ENCODE measurements at regions of chr5 and their contacts with region 1.

Region 1: DNA sequence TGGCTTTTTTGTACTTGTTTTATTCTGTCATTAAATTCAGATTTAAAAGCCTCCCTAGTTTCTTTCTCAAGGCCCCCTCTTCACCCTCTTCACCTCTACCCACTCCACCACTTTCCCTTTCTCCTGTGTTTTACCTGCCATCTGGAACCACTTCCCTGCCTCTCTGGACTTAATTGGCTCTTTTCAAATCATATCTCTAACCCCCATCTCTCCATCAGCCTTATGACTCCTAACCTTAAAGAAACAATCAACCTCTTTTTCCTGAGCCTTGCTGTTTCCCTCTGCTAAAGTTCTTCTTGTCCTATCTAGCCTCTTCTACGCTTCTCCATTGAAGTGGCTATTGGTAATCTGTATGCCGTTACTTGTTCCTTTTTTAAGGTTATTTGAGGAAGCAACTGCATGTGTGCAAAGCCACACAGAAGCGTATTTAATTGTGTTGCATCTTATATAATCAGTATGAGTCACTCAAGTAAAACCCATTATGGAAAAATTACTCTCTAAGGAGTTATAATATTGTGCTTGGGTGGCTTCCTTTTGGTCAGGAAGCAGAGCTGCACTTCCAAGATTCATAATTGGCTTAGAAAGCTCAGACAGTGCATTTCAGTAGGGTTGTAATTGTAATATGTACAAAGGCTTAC is 653.6 kb upstream of the ITGA1 start:
- DNase-seq: no peak
- ATAC-seq: no peak
- H3K4me3 ChIP-seq: no peak overlapping the region
- H3K4me3 Mint-ChIP-seq: no peak overlapping the region
- H3K27ac ChIP-seq: no peak overlapping the region
- H3K27ac Mint-ChIP-seq: no peak overlapping the region
- H3K4me1 ChIP-seq: no peaks in the 10 kb centered on the region
- H3K4me1 Mint-ChIP-seq: no peaks in the 10 kb centered on the region
- H3K27me3 ChIP-seq: no peaks in the 10 kb centered on the region
- H3K27me3 Mint-ChIP-seq: no peaks in the 10 kb centered on the region
- CTCF ChIP-seq: no peak

Region 2: DNA sequence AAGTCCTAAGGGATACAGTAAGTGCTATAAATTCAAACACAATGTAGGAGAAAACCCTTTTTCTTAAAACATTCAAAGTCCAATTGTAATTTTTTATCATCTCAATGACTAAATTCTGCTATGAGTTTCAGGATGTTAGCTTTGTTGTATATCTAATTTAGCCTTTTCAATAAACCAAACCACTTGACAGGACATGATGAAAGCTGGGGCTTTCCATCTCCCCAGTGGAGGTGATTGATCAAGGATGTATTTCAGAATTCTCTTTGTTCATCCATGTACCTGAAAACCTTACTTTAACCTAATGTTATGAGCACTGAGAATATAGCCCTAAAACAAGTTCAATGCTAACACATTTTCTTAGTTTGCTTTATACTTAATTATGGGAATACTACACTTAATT is 14.5 kb after region 1 on chr5:
- CTCF ChIA-PET with region 1: no interaction called
- POLR2A ChIA-PET with region 1: no interaction called
- intact Hi-C with region 1: loop called in 1 of 2 experiments (anchors 2 kb)
- DNase-seq: no peak
- ATAC-seq: no peak
- H3K4me3 ChIP-seq: no peak overlapping the region
- H3K4me3 Mint-ChIP-seq: no peak overlapping the region
- H3K27ac ChIP-seq: no peak overlapping the region
- H3K27ac Mint-ChIP-seq: no peak overlapping the region
- H3K4me1 ChIP-seq: no peaks in the 10 kb centered on the region
- H3K4me1 Mint-ChIP-seq: no peaks in the 10 kb centered on the region
- H3K27me3 ChIP-seq: no peaks in the 10 kb centered on the region
- H3K27me3 Mint-ChIP-seq: no peaks in the 10 kb centered on the region
- CTCF ChIP-seq: no peak

Measured in CD4-positive, alpha-beta T cell (primary cell).